OCI-LY7 (cell line): ENCODE measurements at regions of chr6 and their contacts with region 1.

Region 1: GRCh38 chr6:144215932-144216667 is 65.8 kb downstream of the STX11 start:
- DNase-seq: peak; percentile 93
- H3K4me3 ChIP-seq: peak overlapping the region; percentile 68
- H3K27ac ChIP-seq: peak overlapping the region; percentile 78
- H3K4me1 ChIP-seq: peaks cover 17% of the 10 kb centered on the region
- CTCF ChIP-seq: peak; percentile 76

Region 2: DNA sequence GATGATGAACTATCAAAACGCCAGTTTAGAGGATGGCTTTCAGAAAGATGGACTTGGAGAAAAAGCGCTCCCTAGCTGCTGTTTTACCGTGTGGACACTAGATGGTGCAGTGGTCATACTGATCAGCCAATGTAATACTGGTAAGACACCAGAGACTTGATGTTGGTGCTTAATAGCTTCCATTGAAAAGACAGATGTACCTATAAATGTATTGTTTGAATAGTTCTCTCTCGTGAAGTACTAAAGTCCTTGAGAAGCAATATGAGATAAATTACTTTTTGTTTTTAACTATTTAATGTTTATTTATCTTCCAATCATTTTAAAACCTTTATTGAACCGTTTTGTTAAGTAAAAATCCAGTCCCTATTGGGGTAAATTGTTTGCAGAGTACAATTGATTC is 640.7 kb before region 1 on chr6:
- CTCF ChIA-PET with region 1: no interaction called
- POLR2A ChIA-PET with region 1: no interaction called
- intact Hi-C with region 1: loop called (anchors 10 kb)
- DNase-seq: peak; percentile 69
- H3K4me3 ChIP-seq: no peak overlapping the region
- H3K27ac ChIP-seq: no peak overlapping the region
- H3K4me1 ChIP-seq: no peaks in the 10 kb centered on the region
- CTCF ChIP-seq: peak; percentile 93

Region 3: DNA sequence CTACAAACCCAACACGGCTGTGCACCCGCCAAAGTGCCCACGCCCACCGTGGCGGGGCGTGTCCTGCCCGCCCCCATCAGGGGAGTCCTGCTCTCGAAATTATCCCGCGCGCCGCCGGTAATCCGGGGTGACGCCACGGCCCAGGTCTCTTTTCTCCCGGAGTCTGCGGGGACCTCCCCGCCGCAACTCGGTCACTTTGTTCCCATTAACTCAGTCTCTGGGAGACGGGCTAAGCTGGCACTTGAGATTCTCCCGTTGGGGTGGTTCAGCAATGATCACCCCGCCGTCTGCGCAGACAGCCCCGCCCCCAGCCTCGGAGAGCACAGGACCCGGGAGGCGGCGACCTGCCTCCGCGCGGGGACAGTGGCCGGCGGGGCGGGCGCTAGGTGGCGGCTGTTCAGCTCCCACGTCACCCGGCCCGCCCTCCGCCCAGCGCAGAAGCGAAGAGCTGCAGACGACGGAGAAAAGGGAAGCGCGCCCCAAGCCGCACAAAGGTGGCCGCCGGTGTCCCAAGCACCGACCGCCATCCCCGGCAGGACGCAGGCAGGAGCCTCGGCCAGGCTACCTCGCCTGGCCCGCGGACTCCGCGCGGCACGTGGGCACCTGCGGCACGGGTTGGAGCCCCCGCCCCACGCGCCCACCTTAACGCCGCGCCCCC is 152.2 kb before region 1 on chr6:
- CTCF ChIA-PET with region 1: no interaction called
- POLR2A ChIA-PET with region 1: interaction called, 5 read pairs
- intact Hi-C with region 1: loop called (anchors 1 kb)
- DNase-seq: peak; percentile 89
- H3K4me3 ChIP-seq: peak overlapping the region; percentile 82
- H3K27ac ChIP-seq: peak overlapping the region; percentile 29
- H3K4me1 ChIP-seq: peaks cover 24% of the 10 kb centered on the region
- CTCF ChIP-seq: peak; percentile 60

Region 4: DNA sequence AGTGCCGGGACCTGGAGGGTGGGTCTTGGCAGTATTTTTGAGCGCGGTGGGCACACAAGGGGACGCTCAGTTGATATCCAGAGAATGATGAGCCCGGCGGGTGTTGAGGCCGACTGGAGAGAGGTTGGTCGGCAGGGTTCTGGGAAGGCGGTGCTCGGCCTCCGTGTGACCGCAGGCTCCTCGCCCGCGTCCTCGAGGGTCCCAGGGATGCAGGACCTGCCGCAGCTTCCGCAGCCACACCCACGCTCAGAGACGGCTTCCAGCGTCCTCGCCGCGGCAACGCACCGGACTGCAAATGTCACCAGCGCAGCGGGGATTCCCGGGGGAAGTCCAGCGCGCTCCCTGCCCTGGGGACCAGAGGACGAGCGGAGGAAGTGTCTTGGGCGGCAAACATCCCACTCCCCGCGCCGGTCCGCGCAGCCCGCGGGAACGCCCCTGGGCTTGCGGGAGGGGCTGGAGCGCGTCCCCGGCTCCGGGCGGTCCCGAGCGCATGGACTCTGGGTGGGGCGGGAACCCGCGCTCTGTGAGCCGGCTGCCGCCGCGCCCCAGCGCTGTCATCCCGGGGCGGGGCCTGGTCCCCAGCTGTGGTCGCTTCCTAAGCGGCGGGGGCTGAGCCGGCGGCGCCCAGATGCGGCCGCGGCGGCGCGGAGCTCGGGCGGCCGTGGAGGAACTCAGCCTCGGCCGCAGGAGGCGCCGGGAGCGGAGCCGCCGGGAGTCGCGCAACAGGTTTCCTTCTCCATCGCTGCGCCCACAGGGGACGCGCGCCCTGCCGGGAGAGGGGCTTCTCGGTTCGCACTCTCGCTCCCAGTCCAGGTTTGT is 66.0 kb before region 1 on chr6 and contains the start of gene STX11:
- CTCF ChIA-PET with region 1: no interaction called
- POLR2A ChIA-PET with region 1: interaction called, 4 read pairs
- intact Hi-C with region 1: loop called (anchors 1 kb)
- DNase-seq: peak; percentile 28
- H3K4me3 ChIP-seq: peak within 1 kb of the TSS; percentile 64
- H3K27ac ChIP-seq: no peak within 1 kb of the TSS
- H3K4me1 ChIP-seq: no peaks in the 10 kb centered on the region
- CTCF ChIP-seq: no peak
- total RNA-seq, gene STX11: 0.16 and 0.21 TPM in 2 replicates

Region 5: GRCh38 chr6:144190593-144190992 is 25.5 kb before region 1 on chr6:
- CTCF ChIA-PET with region 1: no interaction called
- POLR2A ChIA-PET with region 1: no interaction called
- intact Hi-C with region 1: no loop called
- DNase-seq: no peak
- H3K4me3 ChIP-seq: no peak overlapping the region
- H3K27ac ChIP-seq: no peak overlapping the region
- H3K4me1 ChIP-seq: no peaks in the 10 kb centered on the region
- CTCF ChIP-seq: no peak

Region 6: GRCh38 chr6:144482142-144482541 is 266.0 kb after region 1 on chr6:
- CTCF ChIA-PET with region 1: no interaction called
- POLR2A ChIA-PET with region 1: no interaction called
- intact Hi-C with region 1: loop called (anchors 2 kb)
- DNase-seq: peak; percentile 75
- H3K4me3 ChIP-seq: no peak overlapping the region
- H3K27ac ChIP-seq: no peak overlapping the region
- H3K4me1 ChIP-seq: no peaks in the 10 kb centered on the region
- CTCF ChIP-seq: peak; percentile 83

Region 7: DNA sequence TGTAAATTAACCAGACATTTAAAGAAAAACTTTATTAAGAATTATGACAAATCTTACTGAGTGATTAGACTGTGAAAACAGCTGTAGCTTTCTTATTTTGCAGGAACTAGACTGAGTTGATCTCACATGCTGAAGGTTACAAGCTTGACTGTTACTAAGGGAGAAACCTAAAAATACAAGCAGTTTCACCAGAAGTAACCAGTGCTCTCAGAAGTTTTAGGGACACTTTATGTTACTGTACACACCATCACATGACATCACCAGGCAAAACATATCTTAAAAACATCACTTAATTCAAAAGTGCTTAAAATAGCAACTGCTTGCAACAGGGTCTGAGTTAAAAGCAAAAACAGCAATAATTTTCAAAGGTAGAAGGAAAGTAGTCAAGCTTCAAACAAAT is 1593.1 kb after region 1 on chr6:
- CTCF ChIA-PET with region 1: no interaction called
- POLR2A ChIA-PET with region 1: no interaction called
- intact Hi-C with region 1: loop called (anchors 10 kb)
- DNase-seq: peak; percentile 36
- H3K4me3 ChIP-seq: peak overlapping the region; percentile 5
- H3K27ac ChIP-seq: peak overlapping the region; percentile 42
- H3K4me1 ChIP-seq: peaks cover 40% of the 10 kb centered on the region
- CTCF ChIP-seq: no peak